Naive thymus-derived CD4-positive, alpha-beta T cell (primary cell): ENCODE measurements at regions of chr1 and their contacts with region 1.

Region 1: GRCh38 chr1:114581335-114582287 is at the start of gene BCAS2:
- DNase-seq: peak; percentile 71 to 98 (median 97)
- ATAC-seq: peak; percentile 97
- H3K4me3 ChIP-seq: peak within 1 kb of the TSS; percentile 76
- H3K4me3 Mint-ChIP-seq: peak within 1 kb of the TSS; percentile 92 to 99 (median 98)
- H3K27ac ChIP-seq: peak within 1 kb of the TSS; percentile 93
- H3K27ac Mint-ChIP-seq: peak within 1 kb of the TSS; percentile 95 to 99 (median 98)
- H3K4me1 ChIP-seq: peaks cover 21 to 23% of the 10 kb centered on the region in 2 donors
- H3K4me1 Mint-ChIP-seq: peaks cover 14 to 55% (median 41%) of the 10 kb centered on the region in 7 donors
- H3K27me3 ChIP-seq: peaks cover 0 to 3% of the 10 kb centered on the region in 2 donors
- H3K27me3 Mint-ChIP-seq: peaks cover 0 to 4% (median 4%) of the 10 kb centered on the region in 5 donors
- total RNA-seq, gene BCAS2: 32.3 to 87.1 (median 46.0) TPM

Region 2: GRCh38 chr1:114467488-114467887 is 114.1 kb before region 1 on chr1:
- CTCF ChIA-PET with region 1: no interaction called
- POLR2A ChIA-PET with region 1: no interaction called
- intact Hi-C with region 1: loop called in 1 of 2 experiments (anchors 5 kb)
- DNase-seq: peak in 3 of 9 donors; percentile 11 to 24 (median 13)
- ATAC-seq: peak; percentile 26
- H3K4me3 ChIP-seq: no peak overlapping the region
- H3K4me3 Mint-ChIP-seq: peak overlapping the region in 9 of 10 donors; percentile 14 to 73 (median 68)
- H3K27ac ChIP-seq: no peak overlapping the region
- H3K27ac Mint-ChIP-seq: peak overlapping the region in 8 of 9 donors; percentile 20 to 93 (median 64)
- H3K4me1 ChIP-seq: peaks cover 20 to 23% of the 10 kb centered on the region in 2 donors
- H3K4me1 Mint-ChIP-seq: peaks cover 45 to 80% (median 62%) of the 10 kb centered on the region in 7 donors
- H3K27me3 ChIP-seq: no peaks in the 10 kb centered on the region
- H3K27me3 Mint-ChIP-seq: no peaks in the 10 kb centered on the region

Region 3: GRCh38 chr1:114503916-114504422 is 77.6 kb before region 1 on chr1:
- CTCF ChIA-PET with region 1: no interaction called
- POLR2A ChIA-PET with region 1: no interaction called
- intact Hi-C with region 1: no loop called
- DNase-seq: no peak
- ATAC-seq: no peak
- H3K4me3 ChIP-seq: no peak overlapping the region
- H3K4me3 Mint-ChIP-seq: peak overlapping the region in 5 of 10 donors; percentile 14 to 34 (median 25)
- H3K27ac ChIP-seq: no peak overlapping the region
- H3K27ac Mint-ChIP-seq: peak overlapping the region in 2 of 9 donors; percentile 21 to 40
- H3K4me1 ChIP-seq: peaks cover 15 to 16% of the 10 kb centered on the region in 2 donors
- H3K4me1 Mint-ChIP-seq: peaks cover 55 to 91% (median 74%) of the 10 kb centered on the region in 7 donors
- H3K27me3 ChIP-seq: no peaks in the 10 kb centered on the region
- H3K27me3 Mint-ChIP-seq: no peaks in the 10 kb centered on the region

Region 4: DNA sequence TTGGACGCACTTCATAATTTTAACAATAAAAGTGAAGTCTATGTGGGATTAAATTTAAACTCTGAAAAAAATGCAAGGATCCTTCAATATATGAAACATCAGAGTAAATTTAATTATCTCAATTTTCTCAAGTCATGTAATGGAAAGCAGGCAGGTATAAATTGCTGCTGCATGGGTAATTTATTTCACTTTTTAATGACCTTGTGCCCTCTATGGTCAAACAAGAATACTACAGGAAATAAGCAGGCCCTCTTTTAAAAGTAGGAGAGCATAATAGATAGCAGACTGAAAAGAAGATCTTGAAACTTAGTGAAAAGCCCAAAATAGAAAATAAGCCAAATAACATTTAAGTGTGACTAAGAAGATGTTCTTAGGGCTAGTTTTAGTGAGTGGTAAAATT is 23.1 kb before region 1 on chr1:
- CTCF ChIA-PET with region 1: no interaction called
- POLR2A ChIA-PET with region 1: no interaction called
- intact Hi-C with region 1: no loop called
- DNase-seq: peak in 4 of 9 donors; percentile 16 to 39 (median 25)
- ATAC-seq: no peak
- H3K4me3 ChIP-seq: no peak overlapping the region
- H3K4me3 Mint-ChIP-seq: no peak overlapping the region
- H3K27ac ChIP-seq: no peak overlapping the region
- H3K27ac Mint-ChIP-seq: no peak overlapping the region
- H3K4me1 ChIP-seq: no peaks in the 10 kb centered on the region
- H3K4me1 Mint-ChIP-seq: peaks cover 0 to 3% (median 0%) of the 10 kb centered on the region in 7 donors
- H3K27me3 ChIP-seq: no peaks in the 10 kb centered on the region
- H3K27me3 Mint-ChIP-seq: no peaks in the 10 kb centered on the region

Region 5: DNA sequence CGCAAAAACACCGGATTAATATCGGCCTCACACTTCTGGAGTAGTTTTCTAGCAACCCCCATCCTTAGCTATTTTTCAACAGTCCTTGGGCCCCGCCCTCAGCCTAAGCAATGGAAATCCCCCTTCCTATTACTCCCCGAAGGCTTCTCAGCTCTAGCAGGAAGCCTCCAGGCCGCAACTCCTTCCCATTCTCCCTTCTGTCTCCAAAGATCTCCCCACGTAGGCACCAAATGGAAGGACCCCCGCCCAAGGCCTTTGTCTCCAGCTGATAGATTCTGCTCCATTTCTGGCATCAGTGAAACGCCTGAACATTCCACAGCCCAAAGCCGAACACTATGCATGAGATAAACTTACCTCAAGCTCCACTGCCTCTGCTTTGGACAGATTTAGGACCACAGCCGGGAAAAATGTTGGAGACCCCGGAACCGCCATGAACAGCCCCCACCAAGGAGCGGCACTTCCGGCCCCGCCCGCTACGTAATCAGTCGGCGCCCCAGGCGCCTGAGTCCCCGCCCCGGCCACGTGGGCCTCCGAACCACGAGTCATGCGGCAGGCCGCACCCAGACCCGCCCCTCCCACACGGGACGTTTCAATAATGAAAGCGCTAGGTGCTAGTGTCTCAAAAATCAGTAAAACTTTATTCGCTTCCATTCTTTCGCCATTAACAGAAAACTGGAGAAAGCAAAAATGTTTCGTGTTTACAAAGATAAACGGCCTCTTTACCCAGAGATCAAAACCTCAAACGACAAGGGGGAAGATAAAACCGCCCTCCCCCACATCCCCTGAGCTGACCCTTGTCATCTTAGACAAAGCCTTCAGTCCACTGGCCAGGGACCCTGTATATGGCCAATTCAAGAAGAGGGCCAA is 134.9 kb after region 1 on chr1 and contains the start of gene NRAS:
- CTCF ChIA-PET with region 1: no interaction called
- POLR2A ChIA-PET with region 1: interaction called, 18 read pairs
- intact Hi-C with region 1: loop called (anchors 1 kb)
- DNase-seq: peak; percentile 90 to 96 (median 94)
- ATAC-seq: peak; percentile 98
- H3K4me3 ChIP-seq: peak within 1 kb of the TSS; percentile 98
- H3K4me3 Mint-ChIP-seq: peak within 1 kb of the TSS; percentile 91 to 100 (median 96)
- H3K27ac ChIP-seq: peak within 1 kb of the TSS; percentile 98
- H3K27ac Mint-ChIP-seq: peak within 1 kb of the TSS; percentile 93 to 99 (median 97)
- H3K4me1 ChIP-seq: peaks cover 17 to 20% of the 10 kb centered on the region in 2 donors
- H3K4me1 Mint-ChIP-seq: peaks cover 10 to 34% (median 25%) of the 10 kb centered on the region in 7 donors
- H3K27me3 ChIP-seq: no peaks in the 10 kb centered on the region
- H3K27me3 Mint-ChIP-seq: no peaks in the 10 kb centered on the region
- total RNA-seq, gene NRAS: 22.3 to 56.0 (median 25.0) TPM

Region 6: GRCh38 chr1:114780344-114781226 is 199.0 kb after region 1 on chr1 and contains the start of gene SIKE1:
- CTCF ChIA-PET with region 1: no interaction called
- POLR2A ChIA-PET with region 1: interaction called, 3 read pairs
- intact Hi-C with region 1: loop called (anchors 1 kb)
- DNase-seq: peak; percentile 82 to 98 (median 95)
- ATAC-seq: peak; percentile 99
- H3K4me3 ChIP-seq: peak within 1 kb of the TSS; percentile 78
- H3K4me3 Mint-ChIP-seq: peak within 1 kb of the TSS; percentile 98 to 100 (median 100)
- H3K27ac ChIP-seq: peak within 1 kb of the TSS; percentile 87
- H3K27ac Mint-ChIP-seq: peak within 1 kb of the TSS; percentile 96 to 100 (median 99)
- H3K4me1 ChIP-seq: peaks cover 0 to 8% of the 10 kb centered on the region in 2 donors
- H3K4me1 Mint-ChIP-seq: peaks cover 19 to 40% (median 30%) of the 10 kb centered on the region in 7 donors
- H3K27me3 ChIP-seq: no peaks in the 10 kb centered on the region
- H3K27me3 Mint-ChIP-seq: peaks cover 0 to 17% (median 0%) of the 10 kb centered on the region in 5 donors
- total RNA-seq, gene SIKE1: 43.4 to 69.4 (median 61.2) TPM